HCT116 (cell line): ENCODE measurements at regions of chr12 and their contacts with region 1.

Region 1: GRCh38 chr12:52278541-52279421 is 4.3 kb downstream of the KRT86 start:
- DNase-seq: peak; percentile 57
- ATAC-seq: peak; percentile 81
- H3K4me3 ChIP-seq: peak overlapping the region; percentile 34 to 50
- H3K27ac ChIP-seq: peak overlapping the region; percentile 73
- H3K4me1 ChIP-seq: peaks cover 41 to 65% of the 10 kb centered on the region in 2 experiments
- H3K27me3 ChIP-seq: no peaks in the 10 kb centered on the region
- CTCF ChIP-seq: peak in 2 of 3 experiments; percentile 96 to 99; a peak in 4 of 6 replicates
- POLR2A ChIP-seq: no peak
- RAD21 ChIP-seq: no peak

Region 2: DNA sequence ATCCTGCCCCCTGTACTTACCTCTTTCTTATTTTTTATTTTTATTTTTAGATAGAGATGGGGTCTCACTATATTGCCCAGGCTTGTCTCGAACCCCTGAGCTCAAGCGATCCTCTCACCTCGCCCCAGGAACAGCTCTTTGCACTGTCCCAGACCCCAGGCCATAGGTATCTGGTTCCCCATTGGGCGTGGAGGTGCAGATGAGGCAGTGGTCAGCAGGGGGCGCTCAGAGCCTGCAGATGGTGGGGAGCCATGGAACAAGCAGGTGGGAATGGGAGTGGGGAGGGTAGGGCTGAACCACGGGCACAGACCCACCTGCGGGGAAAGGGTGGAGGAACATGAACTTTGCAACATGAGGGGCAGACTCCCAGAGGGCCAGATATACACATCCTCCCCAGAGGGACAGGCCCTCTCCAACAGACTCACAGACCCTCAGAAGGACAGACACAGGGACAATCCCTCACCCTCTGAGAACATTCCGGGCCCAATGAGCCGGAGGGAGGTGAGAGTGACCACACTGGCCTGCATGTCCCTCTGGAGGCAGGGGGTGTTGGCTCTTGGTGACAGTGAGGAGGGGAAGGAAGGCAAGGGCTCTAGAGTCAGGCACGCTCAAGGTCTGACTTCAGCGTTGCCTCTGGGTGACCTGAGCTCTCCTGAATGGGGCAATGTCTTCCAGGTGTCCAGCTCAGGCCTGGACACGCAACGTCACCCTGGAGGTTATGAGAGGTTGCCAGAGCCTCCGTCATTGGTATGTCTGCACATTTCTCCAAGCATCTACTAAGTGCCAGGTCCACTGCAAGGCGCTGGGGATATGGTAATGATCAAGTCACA is 121.8 kb before region 1 on chr12:
- CTCF ChIA-PET with region 1: interaction called, 15 read pairs
- POLR2A ChIA-PET with region 1: interaction called, 3 read pairs
- RAD21 ChIA-PET with region 1: interaction called in 1 of 2 experiments, 4 read pairs
- intact Hi-C with region 1: no loop called
- DNase-seq: no peak
- ATAC-seq: peak; percentile 67
- H3K4me3 ChIP-seq: no peak overlapping the region
- H3K27ac ChIP-seq: no peak overlapping the region
- H3K4me1 ChIP-seq: peaks cover 27 to 64% of the 10 kb centered on the region in 2 experiments
- H3K27me3 ChIP-seq: no peaks in the 10 kb centered on the region
- CTCF ChIP-seq: peak in 2 of 3 experiments; percentile 95 to 98; a peak in 4 of 6 replicates
- POLR2A ChIP-seq: no peak
- RAD21 ChIP-seq: no peak

Region 3: DNA sequence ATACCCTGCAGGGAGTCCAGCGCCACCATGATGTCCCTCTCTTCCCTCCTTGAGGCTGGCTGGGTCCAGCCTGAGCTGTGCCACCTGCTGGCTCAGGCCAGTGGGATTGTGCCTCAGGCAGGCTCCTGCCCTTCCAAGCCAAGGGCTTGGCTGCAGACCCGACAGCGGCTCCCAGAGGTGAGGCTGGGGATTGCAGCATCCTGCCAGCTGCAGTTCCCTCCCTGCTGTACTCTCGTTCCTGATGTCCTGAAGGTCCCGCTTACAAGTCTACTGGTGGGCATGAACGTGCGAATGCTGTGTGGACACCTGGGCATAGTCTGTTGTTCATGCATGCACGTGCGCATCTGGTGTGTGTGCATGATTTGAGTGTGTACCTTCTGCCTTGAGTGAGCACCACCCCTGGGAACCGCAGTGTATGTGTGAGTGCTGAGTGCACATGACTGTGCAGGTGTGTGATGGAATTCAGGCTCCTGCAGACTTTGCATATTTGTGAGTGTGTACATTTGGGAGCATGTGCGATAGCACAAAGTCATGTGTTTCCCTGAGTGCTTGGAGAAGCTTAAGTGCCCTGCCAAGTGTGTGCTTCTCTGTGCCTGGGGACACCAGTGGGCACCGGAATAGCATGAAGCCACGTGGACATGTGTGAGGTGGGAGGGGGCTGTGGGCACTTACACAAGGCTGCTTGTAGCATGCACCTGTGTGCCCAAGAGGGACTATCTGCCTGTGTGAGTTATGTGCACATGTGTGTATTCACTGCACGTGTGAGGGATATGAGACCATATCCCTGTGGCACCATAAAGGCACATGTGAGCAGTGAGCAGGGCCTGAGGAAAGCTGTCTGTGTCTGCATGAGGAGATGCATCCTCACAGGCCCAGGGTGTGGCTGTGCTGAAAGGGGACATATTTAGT is 65.0 kb before region 1 on chr12:
- CTCF ChIA-PET with region 1: interaction called, 24 read pairs
- POLR2A ChIA-PET with region 1: interaction called, 12 read pairs
- RAD21 ChIA-PET with region 1: interaction called in 1 of 2 experiments, 3 read pairs
- intact Hi-C with region 1: loop called (anchors 2 kb)
- DNase-seq: peak; percentile 82
- ATAC-seq: peak; percentile 80
- H3K4me3 ChIP-seq: no peak overlapping the region
- H3K27ac ChIP-seq: no peak overlapping the region
- H3K4me1 ChIP-seq: peaks cover 51 to 77% of the 10 kb centered on the region in 2 experiments
- H3K27me3 ChIP-seq: peaks cover 3% of the 10 kb centered on the region
- CTCF ChIP-seq: peak in 2 of 3 experiments; percentile 99 to 100; a peak in 4 of 6 replicates
- POLR2A ChIP-seq: no peak
- RAD21 ChIP-seq: no peak

Region 4: DNA sequence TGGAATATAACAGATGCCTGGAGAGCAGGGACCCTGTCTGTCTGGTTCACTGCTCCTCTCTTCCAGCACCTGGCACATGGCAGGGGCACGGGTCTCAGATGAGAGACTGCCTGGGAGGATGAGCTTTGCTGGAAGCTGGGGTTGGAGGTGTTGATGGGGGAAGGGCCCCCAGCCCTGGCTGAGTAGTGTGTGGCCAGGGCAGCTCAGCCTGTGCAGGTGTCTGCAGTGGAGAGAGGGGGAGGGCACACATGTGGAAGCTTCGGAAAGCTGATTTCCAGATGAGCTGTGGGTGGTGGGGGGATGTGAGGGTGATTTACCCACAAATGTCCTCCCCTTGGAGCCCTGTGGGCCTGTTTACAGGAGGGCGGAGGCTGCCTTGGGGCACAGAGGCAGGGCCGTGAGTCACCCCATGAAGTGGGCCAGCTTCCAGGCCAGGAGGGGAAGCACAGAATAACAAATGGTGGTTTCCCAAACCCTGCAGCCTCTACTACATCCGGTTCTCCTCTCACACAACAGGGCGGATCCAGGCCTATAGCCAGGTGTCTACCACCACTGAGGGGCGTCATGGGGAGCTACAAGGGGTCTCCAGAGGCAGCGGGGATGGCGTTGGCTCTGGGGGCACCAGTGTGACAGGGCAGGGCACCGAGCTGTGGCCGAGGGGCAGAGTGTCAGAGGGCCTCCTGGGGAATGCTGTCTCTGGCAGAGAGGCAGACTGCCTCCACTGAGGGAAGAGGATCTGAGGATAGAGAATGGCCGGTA is 34.7 kb before region 1 on chr12:
- CTCF ChIA-PET with region 1: interaction called, 21 read pairs
- POLR2A ChIA-PET with region 1: interaction called, 7 read pairs
- RAD21 ChIA-PET with region 1: interaction called, 3 to 6 read pairs
- intact Hi-C with region 1: no loop called
- DNase-seq: no peak
- ATAC-seq: peak; percentile 78
- H3K4me3 ChIP-seq: peak overlapping the region; percentile 19 to 48
- H3K27ac ChIP-seq: peak overlapping the region; percentile 68
- H3K4me1 ChIP-seq: peaks cover 64 to 92% of the 10 kb centered on the region in 2 experiments
- H3K27me3 ChIP-seq: no peaks in the 10 kb centered on the region
- CTCF ChIP-seq: no peak
- POLR2A ChIP-seq: no peak
- RAD21 ChIP-seq: no peak

Region 5: GRCh38 chr12:52307836-52308805 is 29.3 kb after region 1 on chr12:
- CTCF ChIA-PET with region 1: interaction called, 7 read pairs
- POLR2A ChIA-PET with region 1: interaction called, 16 read pairs
- RAD21 ChIA-PET with region 1: no interaction called
- intact Hi-C with region 1: no loop called
- DNase-seq: peak; percentile 24
- ATAC-seq: peak; percentile 96
- H3K4me3 ChIP-seq: peak overlapping the region; percentile 40 to 58
- H3K27ac ChIP-seq: peak overlapping the region; percentile 3; the same call in 1 of the 2 replicates
- H3K4me1 ChIP-seq: peaks cover 10 to 32% of the 10 kb centered on the region in 2 experiments
- H3K27me3 ChIP-seq: no peaks in the 10 kb centered on the region
- CTCF ChIP-seq: peak in 1 of 3 experiments; percentile 14; a peak in 1 of 6 replicates
- POLR2A ChIP-seq: no peak
- RAD21 ChIP-seq: no peak